Breast epithelium (tissue), 4 donors: ENCODE measurements at regions of chr13 and their contacts with region 1.

Region 1: DNA sequence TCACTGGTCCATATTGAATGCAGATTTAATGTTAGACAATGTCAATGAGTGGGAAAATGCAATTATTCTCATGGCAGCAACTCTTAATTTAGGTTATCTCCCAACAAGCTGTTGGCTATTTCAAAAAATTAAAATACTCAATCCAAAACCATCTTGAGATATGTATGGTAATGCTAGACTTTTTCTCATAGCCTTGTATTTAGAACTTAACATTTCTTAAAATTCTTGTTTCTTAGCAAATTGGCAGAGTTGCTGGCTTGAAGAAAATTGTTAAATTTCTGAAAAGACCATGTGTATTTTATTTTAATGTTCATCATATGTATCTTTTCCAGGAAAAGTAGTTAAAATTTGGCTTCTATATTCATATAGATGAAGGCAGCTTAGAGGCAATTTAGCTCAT is 1355.1 kb downstream of the PCDH9 start:
- DNase-seq: no peak
- H3K4me3 ChIP-seq: no peak overlapping the region
- H3K27ac ChIP-seq: no peak overlapping the region
- H3K4me1 ChIP-seq: no peaks in the 10 kb centered on the region
- H3K27me3 ChIP-seq: no peaks in the 10 kb centered on the region
- CTCF ChIP-seq: no peak
- POLR2A ChIP-seq: no peak

Region 2: DNA sequence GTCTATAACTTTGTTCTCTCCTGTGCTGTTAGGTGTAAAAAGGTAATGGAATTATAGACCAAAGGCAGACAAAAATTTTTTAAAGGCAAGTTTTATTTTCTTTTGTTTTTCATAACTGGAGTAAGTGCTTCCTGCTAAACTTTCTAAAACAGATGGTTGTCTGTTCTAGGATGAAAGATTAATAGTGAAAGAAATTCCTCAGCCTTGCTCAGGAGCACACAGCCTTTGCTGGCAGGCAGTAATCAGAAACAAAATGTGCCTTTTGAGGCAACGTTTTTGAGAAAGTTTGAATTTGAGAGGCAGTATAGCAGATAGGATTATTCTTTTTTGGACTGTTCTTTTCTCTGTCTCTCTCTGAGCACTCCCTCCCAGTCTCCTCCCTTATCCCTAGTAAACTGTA is 1394.4 kb before region 1 on chr13:
- intact Hi-C with region 1: no loop called
- DNase-seq: no peak
- H3K4me3 ChIP-seq: no peak overlapping the region
- H3K27ac ChIP-seq: no peak overlapping the region
- H3K4me1 ChIP-seq: no peaks in the 10 kb centered on the region
- H3K27me3 ChIP-seq: no peaks in the 10 kb centered on the region
- CTCF ChIP-seq: no peak
- POLR2A ChIP-seq: no peak

Region 3: DNA sequence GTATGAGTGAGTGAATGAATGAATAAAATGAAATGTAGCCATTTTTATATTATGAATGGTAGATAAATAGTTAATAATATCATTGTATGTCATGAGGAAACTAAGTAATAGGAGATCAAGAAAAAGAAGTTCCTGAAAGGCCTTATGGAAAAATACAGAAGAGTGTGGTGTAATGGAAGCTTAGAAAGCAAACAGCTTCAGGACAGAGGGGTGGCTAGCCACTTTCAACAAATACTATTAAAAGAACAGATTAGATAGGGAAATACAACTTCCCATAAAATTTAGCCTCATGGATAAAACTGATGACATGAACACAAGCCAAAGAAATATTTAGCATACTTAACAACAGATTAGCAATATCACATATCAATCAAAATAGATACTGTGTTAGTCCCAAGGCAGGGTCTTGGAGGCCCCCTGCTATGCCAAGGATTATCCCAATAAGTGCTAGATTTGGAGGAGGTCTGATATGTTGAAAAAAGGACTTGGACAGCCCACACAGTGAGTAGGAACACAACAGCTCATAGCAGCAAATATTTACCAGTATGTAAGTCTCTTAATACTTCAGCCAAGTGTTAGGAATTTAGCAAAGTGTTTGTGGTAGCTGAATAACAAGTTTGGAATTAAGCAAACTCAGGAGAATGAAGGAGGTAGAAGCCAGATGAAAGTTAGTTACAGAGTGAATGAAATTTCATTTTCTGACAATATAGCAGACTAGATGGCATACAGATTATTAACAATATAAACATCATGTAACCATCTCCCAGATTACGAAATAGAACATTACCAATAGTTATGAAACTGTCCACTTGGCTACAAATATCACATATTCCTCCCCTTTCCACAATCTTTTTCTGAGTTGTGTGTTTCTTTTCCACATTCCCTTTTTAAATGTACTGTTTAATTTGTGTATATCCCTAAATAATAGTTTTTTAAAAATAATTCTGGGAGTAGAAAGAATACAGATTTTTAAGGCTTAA is 276.9 kb before region 1 on chr13:
- intact Hi-C with region 1: loop called (anchors 10 kb)
- DNase-seq: no peak
- H3K4me3 ChIP-seq: no peak overlapping the region
- H3K27ac ChIP-seq: no peak overlapping the region
- H3K4me1 ChIP-seq: no peaks in the 10 kb centered on the region
- H3K27me3 ChIP-seq: no peaks in the 10 kb centered on the region
- CTCF ChIP-seq: no peak
- POLR2A ChIP-seq: no peak